OCI-LY7 (cell line): ENCODE measurements at regions of chr12 and their contacts with region 1.

Region 1: GRCh38 chr12:6944381-6945186 is 762 bp downstream of the C12orf57 start:
- DNase-seq: peak; percentile 96
- H3K4me3 ChIP-seq: peak overlapping the region; percentile 73
- H3K27ac ChIP-seq: peak overlapping the region; percentile 96
- H3K4me1 ChIP-seq: peaks cover 49% of the 10 kb centered on the region
- CTCF ChIP-seq: peak; percentile 93

Region 2: GRCh38 chr12:6959058-6959804 is 14.6 kb after region 1 on chr12:
- CTCF ChIA-PET with region 1: interaction called, 110 read pairs
- POLR2A ChIA-PET with region 1: interaction called, 155 read pairs
- intact Hi-C with region 1: loop called (anchors 1 kb)
- DNase-seq: peak; percentile 87
- H3K4me3 ChIP-seq: peak overlapping the region; percentile 55
- H3K27ac ChIP-seq: peak overlapping the region; percentile 63
- H3K4me1 ChIP-seq: peaks cover 75% of the 10 kb centered on the region
- CTCF ChIP-seq: no peak

Region 3: DNA sequence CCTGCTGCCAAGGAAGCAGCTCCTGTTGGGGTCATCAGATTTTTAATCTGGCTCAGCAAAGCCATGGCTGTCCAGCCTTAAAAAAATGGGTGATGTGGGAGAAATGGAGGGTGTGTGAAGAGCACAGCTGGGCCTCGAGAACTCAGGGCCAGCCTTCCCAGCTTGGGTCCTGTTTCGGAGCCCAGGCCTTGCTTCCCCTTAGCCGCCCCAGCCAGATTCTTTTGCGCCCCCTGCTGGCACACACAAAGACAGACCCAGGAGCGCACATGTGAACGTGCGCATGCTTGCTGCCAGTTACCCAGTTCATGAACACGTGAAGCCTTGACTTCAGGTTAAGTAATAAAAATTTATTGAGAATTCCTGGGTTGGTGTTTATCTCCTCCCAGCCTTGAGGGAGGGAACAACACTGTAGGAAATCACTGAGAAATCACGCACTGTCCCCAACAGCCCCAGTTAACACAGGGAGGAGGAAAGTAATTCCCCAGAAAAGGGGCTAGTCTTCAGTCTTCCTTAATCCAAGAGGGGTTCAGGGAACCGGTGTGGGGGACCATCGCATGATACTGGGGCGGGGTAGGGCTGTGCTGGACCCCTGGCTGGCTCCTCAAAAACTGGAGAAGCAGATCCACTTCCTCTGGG is 20.6 kb after region 1 on chr12:
- CTCF ChIA-PET with region 1: interaction called, 110 read pairs
- POLR2A ChIA-PET with region 1: interaction called, 155 read pairs
- intact Hi-C with region 1: loop called (anchors 1 kb)
- DNase-seq: peak; percentile 86
- H3K4me3 ChIP-seq: no peak overlapping the region
- H3K27ac ChIP-seq: peak overlapping the region; percentile 64
- H3K4me1 ChIP-seq: peaks cover 69% of the 10 kb centered on the region
- CTCF ChIP-seq: peak; percentile 98

Region 4: DNA sequence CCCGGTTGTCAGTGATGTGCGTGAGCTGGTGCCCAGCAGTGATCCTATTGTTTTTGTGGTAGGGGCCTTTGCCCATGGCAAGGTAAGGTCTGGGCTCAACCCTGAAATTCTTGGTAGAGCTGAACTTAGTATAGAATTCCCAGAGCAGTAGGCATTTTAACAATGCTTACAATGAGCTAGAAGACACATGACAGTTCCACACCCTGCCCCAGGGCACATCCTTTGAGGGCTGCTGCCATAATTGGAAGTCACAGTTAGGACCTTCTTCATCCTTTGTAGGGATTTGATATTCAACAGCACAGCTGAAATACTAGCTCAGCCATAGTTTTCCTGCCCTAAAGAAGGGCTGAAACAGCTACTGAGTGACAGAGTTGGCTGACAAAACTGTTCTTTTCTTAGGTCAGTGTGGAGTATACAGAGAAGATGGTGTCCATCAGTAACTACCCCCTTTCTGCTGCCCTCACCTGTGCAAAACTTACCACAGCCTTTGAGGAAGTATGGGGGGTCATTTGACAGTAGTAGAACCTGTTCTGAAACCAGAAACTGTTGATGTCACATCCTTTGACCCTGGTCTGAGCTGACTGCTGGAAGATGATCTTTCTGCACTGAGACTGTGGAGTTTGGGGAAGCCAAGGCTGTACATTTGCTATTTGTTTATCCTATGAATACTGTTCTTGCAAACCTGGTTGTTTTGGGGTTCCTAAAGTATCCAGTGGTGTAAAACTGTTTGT is 30.9 kb after region 1 on chr12:
- CTCF ChIA-PET with region 1: no interaction called
- POLR2A ChIA-PET with region 1: interaction called, 16 read pairs
- intact Hi-C with region 1: loop called (anchors 5 kb)
- DNase-seq: no peak
- H3K4me3 ChIP-seq: no peak overlapping the region
- H3K27ac ChIP-seq: peak overlapping the region; percentile 9
- H3K4me1 ChIP-seq: peaks cover 43% of the 10 kb centered on the region
- CTCF ChIP-seq: no peak

Region 5: DNA sequence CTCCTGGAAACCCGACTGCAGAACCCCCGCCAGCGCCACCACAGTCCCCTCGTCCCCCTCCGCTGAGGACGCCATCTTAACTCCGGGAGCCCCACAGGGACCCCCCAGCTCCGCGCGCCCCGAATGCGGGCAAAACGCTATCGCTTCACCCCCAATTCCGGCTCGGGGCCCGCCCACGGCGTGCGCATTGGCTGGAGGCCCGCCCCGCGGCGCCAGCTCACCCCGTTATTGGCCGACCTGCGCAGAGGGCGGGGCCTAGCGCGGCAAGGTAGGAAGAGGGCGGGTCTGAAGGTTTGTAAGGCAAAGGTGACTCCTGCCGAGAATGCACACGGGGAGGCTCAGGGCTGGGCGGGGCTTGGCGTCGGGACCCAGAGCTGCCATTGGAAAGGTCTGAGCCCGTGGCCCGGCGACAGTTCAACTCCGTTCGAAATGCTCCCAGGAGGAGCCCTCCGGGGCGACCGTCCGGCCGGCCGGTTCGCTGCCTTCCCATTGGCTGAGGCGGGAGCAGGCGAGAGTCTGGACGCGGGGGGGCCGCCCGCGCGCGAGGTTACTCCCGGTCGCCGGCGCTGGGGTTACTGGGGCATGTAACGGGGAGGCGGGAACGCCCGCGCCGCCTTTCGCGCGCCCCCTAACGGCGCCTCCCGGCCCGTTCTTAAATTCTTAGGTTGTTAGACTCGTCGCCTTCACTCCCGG is 73.9 kb after region 1 on chr12 and contains the start of gene LPCAT3:
- CTCF ChIA-PET with region 1: interaction called, 3 read pairs
- POLR2A ChIA-PET with region 1: interaction called, 5 read pairs
- intact Hi-C with region 1: loop called (anchors 1 kb)
- DNase-seq: peak; percentile 97
- H3K4me3 ChIP-seq: peak within 1 kb of the TSS; percentile 82
- H3K27ac ChIP-seq: peak within 1 kb of the TSS; percentile 78
- H3K4me1 ChIP-seq: peaks cover 26% of the 10 kb centered on the region
- CTCF ChIP-seq: peak; percentile 83
- total RNA-seq, gene LPCAT3: 11.6 and 17.4 TPM in 2 replicates

Region 6: DNA sequence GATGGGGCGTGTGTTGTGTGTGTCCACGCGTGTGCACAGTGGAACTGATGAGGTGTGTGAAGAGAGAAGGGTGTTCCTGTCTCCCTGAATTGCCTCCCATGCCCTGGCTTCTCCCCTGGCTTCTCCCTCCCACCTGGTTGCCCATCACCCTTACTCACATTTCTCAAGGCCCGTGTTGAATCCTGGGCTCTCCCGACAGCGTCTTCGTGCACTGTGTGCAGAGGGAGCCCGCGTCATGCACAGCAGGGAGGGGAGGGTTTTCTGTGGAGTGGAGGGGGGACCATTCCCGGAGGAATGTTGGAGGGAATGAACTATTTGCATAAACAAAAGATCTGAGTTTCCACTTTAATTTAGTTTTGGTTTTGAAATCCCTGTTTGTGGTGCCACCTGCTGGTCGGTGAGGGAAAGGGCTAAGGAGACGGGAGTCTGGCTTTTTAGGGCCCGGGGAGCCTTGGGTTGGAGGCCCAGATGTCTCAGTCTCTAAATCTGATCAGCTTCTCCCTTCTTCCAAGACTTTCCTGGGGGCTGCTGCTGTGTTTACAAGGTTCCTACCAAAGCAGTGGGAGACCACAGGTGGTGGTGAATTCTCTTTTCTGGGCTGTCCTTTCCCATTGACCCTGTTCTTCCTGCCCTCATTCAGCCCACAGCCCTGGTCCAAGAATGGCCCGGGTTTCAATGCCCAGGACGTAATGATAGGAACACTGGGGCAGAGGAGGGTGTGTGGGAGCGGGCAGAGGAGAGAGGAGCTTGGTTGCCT is 147.8 kb after region 1 on chr12 and contains the start of gene C1R:
- CTCF ChIA-PET with region 1: no interaction called
- POLR2A ChIA-PET with region 1: interaction called, 5 read pairs
- intact Hi-C with region 1: loop called (anchors 1 kb)
- DNase-seq: peak; percentile 59
- H3K4me3 ChIP-seq: no peak within 1 kb of the TSS
- H3K27ac ChIP-seq: no peak within 1 kb of the TSS
- H3K4me1 ChIP-seq: peaks cover 3% of the 10 kb centered on the region
- CTCF ChIP-seq: peak; percentile 87
- total RNA-seq, gene C1R: not detected in 2 replicates

Region 7: GRCh38 chr12:7108796-7109571 is 164.4 kb after region 1 on chr12 and contains the start of gene C1RL:
- CTCF ChIA-PET with region 1: interaction called, 3 read pairs
- POLR2A ChIA-PET with region 1: interaction called, 18 read pairs
- intact Hi-C with region 1: loop called (anchors 2 kb)
- DNase-seq: peak; percentile 72
- H3K4me3 ChIP-seq: peak within 1 kb of the TSS; percentile 65
- H3K27ac ChIP-seq: no peak within 1 kb of the TSS
- H3K4me1 ChIP-seq: peaks cover 10% of the 10 kb centered on the region
- CTCF ChIP-seq: peak; percentile 91
- total RNA-seq, gene C1RL: 2.9 and 3.0 TPM in 2 replicates

Region 8: DNA sequence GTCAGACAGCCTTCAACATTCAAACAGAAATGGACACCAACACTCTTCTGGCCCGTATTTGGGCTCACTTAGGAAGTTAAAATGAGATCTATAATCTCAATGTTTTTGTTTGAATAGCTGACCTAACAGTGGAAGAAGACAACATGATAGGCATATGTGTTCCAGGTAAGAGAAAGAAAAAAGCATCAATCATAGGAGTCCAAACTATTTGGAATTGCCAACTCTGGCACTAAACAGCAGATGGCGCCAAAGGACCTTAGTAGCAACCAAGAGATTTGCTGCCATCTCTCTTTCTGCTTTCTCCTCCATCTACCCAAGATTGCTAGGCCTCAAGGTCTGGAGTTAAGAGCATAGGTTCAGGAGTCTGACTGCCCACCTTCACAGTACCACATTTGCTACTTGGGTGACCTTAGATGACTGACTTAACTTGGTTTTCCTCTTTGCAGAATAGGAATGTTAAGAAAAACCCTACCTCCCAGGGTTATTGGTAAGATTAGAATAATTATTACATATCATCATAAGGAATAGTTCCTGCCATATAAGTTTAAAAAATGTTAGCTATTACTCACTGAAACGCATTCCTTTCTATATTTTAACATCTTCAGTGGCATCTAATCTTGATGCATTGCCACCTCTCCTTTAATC is 275.1 kb after region 1 on chr12:
- CTCF ChIA-PET with region 1: no interaction called
- POLR2A ChIA-PET with region 1: no interaction called
- intact Hi-C with region 1: no loop called
- DNase-seq: peak; percentile 84
- H3K4me3 ChIP-seq: no peak overlapping the region
- H3K27ac ChIP-seq: no peak overlapping the region
- H3K4me1 ChIP-seq: no peaks in the 10 kb centered on the region
- CTCF ChIP-seq: peak; percentile 98